ENCODE measurements at regions of chr9 and their contacts with region 1.

Region 1: GRCh38 chr9:97921959-97922724 is at the start of gene TRMO:
- DNase-seq: peak; percentile 90 to 97
- H3K4me3 ChIP-seq: peak within 1 kb of the TSS; percentile 66
- H3K27ac ChIP-seq: peak within 1 kb of the TSS; percentile 82
- H3K4me1 ChIP-seq: peaks cover 18% of the 10 kb centered on the region; the same call in 1 of the 2 replicates
- H3K27me3 ChIP-seq: no peaks in the 10 kb centered on the region
- CTCF ChIP-seq: peak; percentile 70
- total RNA-seq, gene TRMO: 12.0 and 15.8 TPM in 2 replicates

Region 2: GRCh38 chr9:97710356-97711222 is 211.6 kb before region 1 on chr9:
- CTCF ChIA-PET with region 1: interaction called, 3 read pairs
- POLR2A ChIA-PET with region 1: no interaction called
- intact Hi-C with region 1: loop called (anchors 1 kb)
- DNase-seq: peak; percentile 59
- H3K4me3 ChIP-seq: no peak overlapping the region
- H3K27ac ChIP-seq: no peak overlapping the region
- H3K4me1 ChIP-seq: peaks cover 43% of the 10 kb centered on the region
- H3K27me3 ChIP-seq: no peaks in the 10 kb centered on the region
- CTCF ChIP-seq: peak; percentile 90

Region 3: GRCh38 chr9:97892421-97892820 is 29.7 kb before region 1 on chr9:
- CTCF ChIA-PET with region 1: no interaction called
- POLR2A ChIA-PET with region 1: no interaction called
- intact Hi-C with region 1: no loop called
- DNase-seq: no peak
- H3K4me3 ChIP-seq: no peak overlapping the region
- H3K27ac ChIP-seq: no peak overlapping the region
- H3K4me1 ChIP-seq: 0 out of 2 replicates have a peak, but pooled peaks cover 6% of the 10 kb centered on the region
- H3K27me3 ChIP-seq: no peaks in the 10 kb centered on the region
- CTCF ChIP-seq: peak; percentile 25; the same call in 1 of the 2 replicates

Region 4: DNA sequence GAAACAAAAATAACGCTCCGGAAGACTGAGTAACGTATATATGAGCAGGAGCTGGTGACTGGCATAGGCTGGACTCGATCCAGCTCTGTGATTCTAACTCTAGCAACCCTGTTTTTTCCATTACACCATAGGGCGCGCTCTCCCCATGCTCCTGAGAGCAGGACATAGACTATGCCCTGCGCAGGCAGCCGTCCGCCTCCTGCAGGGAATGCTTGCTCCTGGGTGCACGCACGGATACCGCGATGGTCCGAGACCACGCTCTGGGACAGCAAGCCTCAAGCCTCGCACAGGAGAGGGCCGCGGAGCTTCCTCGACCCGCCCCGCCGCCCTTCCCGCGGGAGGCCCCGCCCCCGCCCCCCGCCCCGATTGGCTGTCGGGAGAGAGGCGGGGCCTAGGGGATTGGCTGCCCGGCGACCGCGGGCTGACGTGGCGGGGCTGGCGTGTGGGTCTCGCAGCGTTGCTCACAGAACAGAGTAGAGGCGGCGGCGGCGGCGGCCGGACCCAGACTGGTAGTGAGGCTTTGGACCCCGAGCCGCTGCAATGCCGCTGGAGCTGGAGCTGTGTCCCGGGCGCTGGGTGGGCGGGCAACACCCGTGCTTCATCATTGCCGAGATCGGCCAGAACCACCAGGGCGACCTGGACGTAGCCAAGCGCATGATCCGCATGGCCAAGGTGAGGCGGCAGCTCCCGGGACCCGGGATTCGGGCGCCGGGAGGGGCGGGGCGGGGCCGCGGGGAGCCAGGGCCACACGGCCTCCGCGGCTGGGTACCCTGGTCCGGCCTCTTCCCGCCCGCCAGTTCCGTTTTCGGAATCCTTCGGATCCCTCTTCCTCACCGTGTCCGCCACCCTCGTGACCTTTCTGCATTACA is 134.4 kb after region 1 on chr9 and contains the start of gene NANS:
- CTCF ChIA-PET with region 1: interaction called, 22 read pairs
- POLR2A ChIA-PET with region 1: interaction called, 13 read pairs
- intact Hi-C with region 1: loop called (anchors 2 kb)
- DNase-seq: peak; percentile 91 to 96
- H3K4me3 ChIP-seq: peak within 1 kb of the TSS; percentile 66
- H3K27ac ChIP-seq: peak within 1 kb of the TSS; percentile 67
- H3K4me1 ChIP-seq: peaks cover 21% of the 10 kb centered on the region
- H3K27me3 ChIP-seq: no peaks in the 10 kb centered on the region
- CTCF ChIP-seq: no peak
- total RNA-seq, gene NANS: 74.6 and 84.9 TPM in 2 replicates

Region 5: DNA sequence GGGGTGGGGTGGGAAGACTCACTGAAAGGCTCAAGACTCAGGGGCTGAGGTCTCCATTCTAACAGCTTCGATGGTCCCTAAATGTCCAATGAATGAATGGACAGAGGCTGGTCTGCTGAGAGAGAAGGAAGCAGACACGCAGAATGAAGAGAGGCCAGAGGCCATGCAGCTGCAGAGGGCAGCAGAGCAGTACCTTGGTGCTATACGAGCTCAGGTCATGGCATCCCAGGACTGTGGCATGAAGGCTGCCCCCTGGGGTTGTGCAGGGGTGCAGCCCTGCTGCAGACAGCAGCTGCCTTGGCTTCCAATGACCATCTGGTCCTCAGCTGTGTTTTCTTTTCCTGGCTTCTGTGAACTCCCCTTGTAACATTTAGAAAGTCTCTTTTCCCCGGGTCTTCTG is 285.5 kb after region 1 on chr9:
- CTCF ChIA-PET with region 1: no interaction called
- POLR2A ChIA-PET with region 1: no interaction called
- intact Hi-C with region 1: loop called (anchors 2 kb)
- DNase-seq: no peak
- H3K4me3 ChIP-seq: no peak overlapping the region
- H3K27ac ChIP-seq: no peak overlapping the region
- H3K4me1 ChIP-seq: no peaks in the 10 kb centered on the region; the same call in 1 of the 2 replicates
- H3K27me3 ChIP-seq: no peaks in the 10 kb centered on the region
- CTCF ChIP-seq: no peak

Region 6: DNA sequence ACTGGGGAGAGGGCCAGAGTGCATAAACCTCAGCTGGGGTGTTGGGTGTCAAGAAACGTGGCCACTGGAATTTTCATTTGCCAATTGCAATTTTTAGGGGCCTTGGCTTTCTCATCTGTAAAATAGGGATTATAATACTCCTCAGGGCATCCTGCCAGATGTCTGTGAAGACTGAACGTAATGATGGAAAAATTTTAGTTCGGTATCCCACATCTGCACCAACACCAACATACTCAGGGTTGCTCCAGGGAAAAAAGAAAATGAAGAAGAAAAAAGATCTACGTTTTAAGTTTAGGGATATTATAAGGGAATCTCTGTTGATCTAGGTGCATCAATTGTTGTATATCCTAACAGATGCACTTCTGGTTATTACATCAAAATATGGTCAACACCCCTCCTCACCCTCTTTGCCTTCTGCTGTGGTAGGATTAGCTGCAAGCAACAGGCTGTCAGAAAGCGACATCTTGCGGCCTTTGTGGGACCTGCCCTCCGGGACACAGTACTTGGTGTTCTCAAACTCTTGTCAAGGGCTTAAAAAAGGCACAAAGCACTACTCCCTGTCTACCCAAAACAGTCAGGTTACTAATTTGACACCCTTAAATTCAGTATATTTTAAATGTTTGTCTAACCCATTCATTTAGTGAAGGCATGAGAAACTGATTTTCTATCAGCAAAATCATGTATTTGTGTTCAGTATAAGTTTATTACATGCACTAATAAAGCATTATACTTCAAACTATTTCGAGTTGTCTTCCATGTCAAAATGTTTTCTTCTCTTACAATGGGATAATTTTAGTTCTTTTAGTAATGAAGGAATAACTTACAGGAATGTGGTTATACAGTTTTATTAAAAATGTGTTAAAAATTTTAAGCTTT is 341.6 kb after region 1 on chr9:
- CTCF ChIA-PET with region 1: no interaction called
- POLR2A ChIA-PET with region 1: no interaction called
- intact Hi-C with region 1: loop called (anchors 1 kb)
- DNase-seq: peak; percentile 59 to 81
- H3K4me3 ChIP-seq: no peak overlapping the region
- H3K27ac ChIP-seq: no peak overlapping the region
- H3K4me1 ChIP-seq: no peaks in the 10 kb centered on the region
- H3K27me3 ChIP-seq: no peaks in the 10 kb centered on the region
- CTCF ChIP-seq: peak; percentile 89

Region 7: GRCh38 chr9:98533132-98533531 is 611.0 kb after region 1 on chr9:
- CTCF ChIA-PET with region 1: no interaction called
- POLR2A ChIA-PET with region 1: no interaction called
- intact Hi-C with region 1: no loop called
- DNase-seq: no peak
- H3K4me3 ChIP-seq: no peak overlapping the region
- H3K27ac ChIP-seq: no peak overlapping the region
- H3K4me1 ChIP-seq: no peaks in the 10 kb centered on the region
- H3K27me3 ChIP-seq: no peaks in the 10 kb centered on the region
- CTCF ChIP-seq: no peak

Region 8: GRCh38 chr9:98848450-98849149 is 926.5 kb after region 1 on chr9:
- CTCF ChIA-PET with region 1: no interaction called
- POLR2A ChIA-PET with region 1: no interaction called
- intact Hi-C with region 1: loop called (anchors 2 kb)
- DNase-seq: peak; percentile 90 to 95
- H3K4me3 ChIP-seq: no peak overlapping the region
- H3K27ac ChIP-seq: peak overlapping the region; percentile 48
- H3K4me1 ChIP-seq: peaks cover 22% of the 10 kb centered on the region
- H3K27me3 ChIP-seq: no peaks in the 10 kb centered on the region
- CTCF ChIP-seq: peak; percentile 89

Measured in PC-9 (cell line).